Ascending aorta (tissue), 2 donors: ENCODE measurements at regions of chr9 and their contacts with region 1.

Region 1: GRCh38 chr9:15416880-15417279 is 5.8 kb upstream of the SNAPC3 start:
- DNase-seq: no peak
- H3K4me3 ChIP-seq: no peak overlapping the region
- H3K27ac ChIP-seq: no peak overlapping the region
- H3K4me1 ChIP-seq: peaks cover 0 to 2% of the 10 kb centered on the region in 2 donors
- H3K27me3 ChIP-seq: no peaks in the 10 kb centered on the region
- CTCF ChIP-seq: peak; percentile 30 to 51 (median 44)

Region 2: GRCh38 chr9:15249042-15249818 is 167.7 kb before region 1 on chr9:
- intact Hi-C with region 1: no loop called
- DNase-seq: no peak
- H3K4me3 ChIP-seq: peak overlapping the region in 1 of 2 donors; percentile 45
- H3K27ac ChIP-seq: peak overlapping the region; percentile 70 to 80
- H3K4me1 ChIP-seq: peaks cover 4 to 26% of the 10 kb centered on the region in 2 donors
- H3K27me3 ChIP-seq: no peaks in the 10 kb centered on the region
- CTCF ChIP-seq: no peak

Region 3: GRCh38 chr9:15357050-15357653 is 59.7 kb before region 1 on chr9:
- intact Hi-C with region 1: loop called (anchors 10 kb)
- DNase-seq: no peak
- H3K4me3 ChIP-seq: no peak overlapping the region
- H3K27ac ChIP-seq: no peak overlapping the region
- H3K4me1 ChIP-seq: no peaks in the 10 kb centered on the region
- H3K27me3 ChIP-seq: no peaks in the 10 kb centered on the region
- CTCF ChIP-seq: no peak

Region 4: DNA sequence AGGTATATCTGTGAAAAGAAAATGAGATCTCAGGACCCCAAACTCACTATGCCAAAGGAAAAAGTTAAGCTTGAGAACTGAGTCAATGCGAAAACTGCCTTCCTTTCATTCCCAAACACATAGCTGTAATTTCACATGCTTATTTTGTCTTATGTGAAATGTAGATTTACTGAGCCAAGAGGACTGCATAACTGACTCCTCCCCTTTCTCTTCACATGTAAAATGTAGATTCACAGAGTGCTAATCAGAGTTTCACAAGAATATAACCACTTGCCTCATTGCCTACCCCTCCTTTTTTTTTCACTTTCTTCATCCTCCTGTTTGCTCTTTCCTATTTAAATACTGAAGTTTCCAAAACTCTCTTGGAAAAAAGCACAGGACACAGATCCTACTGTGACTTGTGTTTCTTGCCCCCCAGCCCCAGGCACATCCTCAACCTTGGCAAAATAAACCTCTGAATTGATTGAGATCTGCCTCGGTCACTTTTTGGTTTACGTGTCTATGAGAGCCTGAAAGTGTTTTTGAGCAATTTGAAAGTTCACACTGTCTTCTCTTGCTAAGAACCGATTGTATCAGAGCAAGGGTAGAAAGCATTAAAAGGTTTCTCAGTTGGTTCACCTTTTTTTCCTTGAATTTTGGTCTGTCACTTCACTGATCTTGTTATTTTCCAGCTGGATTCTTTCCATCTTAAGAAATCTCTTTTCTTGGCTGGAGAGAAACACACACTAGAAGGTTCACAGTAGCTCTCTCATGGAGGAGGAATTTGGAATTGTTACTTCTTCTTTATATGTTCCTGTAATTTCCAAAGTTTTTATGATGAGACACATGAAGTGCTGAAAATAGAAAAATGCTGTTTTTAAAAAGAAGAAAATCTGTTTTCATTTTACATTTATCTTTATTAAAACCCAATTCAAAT is 39.0 kb before region 1 on chr9:
- intact Hi-C with region 1: no loop called
- DNase-seq: no peak
- H3K4me3 ChIP-seq: no peak overlapping the region
- H3K27ac ChIP-seq: peak overlapping the region; percentile 42 to 62
- H3K4me1 ChIP-seq: peaks cover 0 to 5% of the 10 kb centered on the region in 2 donors
- H3K27me3 ChIP-seq: no peaks in the 10 kb centered on the region
- CTCF ChIP-seq: no peak

Region 5: GRCh38 chr9:15392363-15392762 is 24.5 kb before region 1 on chr9:
- intact Hi-C with region 1: no loop called
- DNase-seq: no peak
- H3K4me3 ChIP-seq: no peak overlapping the region
- H3K27ac ChIP-seq: peak overlapping the region in 1 of 2 donors; percentile 30
- H3K4me1 ChIP-seq: peaks cover 0 to 2% of the 10 kb centered on the region in 2 donors
- H3K27me3 ChIP-seq: no peaks in the 10 kb centered on the region
- CTCF ChIP-seq: no peak